Posterior cingulate gyrus (tissue), 11 donors: ENCODE measurements at regions of chr1 and their contacts with region 1.

Region 1: DNA sequence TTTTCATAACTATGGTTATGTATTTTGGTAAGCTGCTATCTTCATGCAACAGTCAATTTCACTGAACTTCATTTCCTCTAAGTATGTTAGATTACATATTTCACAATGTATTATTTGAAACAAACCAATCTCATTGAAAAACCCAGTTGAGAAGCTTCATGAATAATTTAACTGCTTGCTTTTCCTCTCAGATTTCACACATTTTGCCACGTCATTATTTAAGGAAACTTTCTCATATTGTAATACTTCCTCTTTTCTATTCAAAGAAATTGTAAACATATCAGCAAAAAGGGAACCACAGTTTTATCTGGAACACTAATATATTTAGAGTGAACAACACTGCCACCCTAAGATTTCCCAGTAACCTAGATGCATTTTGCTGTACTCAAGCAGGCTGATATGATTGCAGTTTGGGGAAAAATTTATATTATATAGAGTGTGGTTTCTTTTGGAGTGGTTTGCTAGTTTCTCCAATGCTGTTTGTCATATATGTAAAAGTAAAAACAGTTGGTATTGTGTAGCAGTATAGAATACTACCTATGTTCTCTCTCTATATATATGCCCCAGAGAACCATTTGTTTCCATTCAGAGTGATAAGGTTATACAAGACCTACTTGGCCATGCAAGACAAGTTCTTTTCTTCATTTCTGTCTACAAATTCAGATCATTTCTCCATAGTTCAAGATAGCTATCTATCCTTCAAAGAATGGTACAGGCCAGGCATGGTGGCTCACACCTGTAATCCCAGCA is 28.4 kb upstream of the AHCTF1 start:
- DNase-seq: no peak

Region 2: GRCh38 chr1:246907472-246907871 is 52.6 kb before region 1 on chr1:
- intact Hi-C with region 1: loop called (anchors 10 kb)
- DNase-seq: peak in 1 of 10 donors; percentile 16